ENCODE measurements at regions of chr3 and their contacts with region 1.

Region 1: DNA sequence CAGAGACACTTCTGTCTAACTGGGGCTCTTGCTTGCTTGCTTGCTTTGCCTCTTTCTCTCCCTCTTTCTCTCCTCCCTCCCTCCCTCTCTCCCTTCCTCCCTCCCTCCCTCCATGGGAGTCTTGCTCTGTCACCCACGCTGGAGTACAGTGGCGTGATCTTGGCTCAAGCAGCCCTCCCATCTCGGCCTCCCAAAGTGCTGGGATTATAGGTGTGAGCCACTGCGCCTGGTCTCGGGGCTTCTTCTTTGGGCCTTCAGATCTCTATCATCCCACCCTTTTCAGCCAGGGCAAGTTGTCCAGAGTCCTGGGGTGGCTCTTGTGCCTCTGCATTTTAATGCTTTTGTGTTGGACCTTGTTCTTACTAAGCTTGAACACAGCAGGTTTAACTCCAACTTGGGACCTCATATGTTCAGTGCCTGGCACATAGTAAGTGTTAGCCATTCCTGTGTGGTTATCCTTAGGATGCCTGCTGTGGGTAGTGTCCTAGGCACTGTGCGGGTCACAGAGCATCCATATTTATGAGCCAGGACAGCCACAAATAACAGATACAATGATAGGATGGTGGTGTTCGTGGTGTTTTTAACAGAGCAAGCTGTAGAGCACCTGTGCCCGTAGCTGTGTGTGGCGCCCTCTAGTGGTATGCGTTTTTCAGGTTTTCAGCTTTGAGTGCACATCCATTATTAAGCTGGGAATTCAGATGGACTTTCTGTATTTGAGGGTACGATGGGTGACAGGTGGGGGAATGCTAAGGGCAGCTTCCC is 75.1 kb downstream of the CCK start:
- DNase-seq: peak; percentile 70 to 94
- H3K4me3 ChIP-seq: no peak overlapping the region
- CTCF ChIP-seq: peak in 1 of 3 donors; percentile 15
- POLR2A ChIP-seq: no peak

Region 2: DNA sequence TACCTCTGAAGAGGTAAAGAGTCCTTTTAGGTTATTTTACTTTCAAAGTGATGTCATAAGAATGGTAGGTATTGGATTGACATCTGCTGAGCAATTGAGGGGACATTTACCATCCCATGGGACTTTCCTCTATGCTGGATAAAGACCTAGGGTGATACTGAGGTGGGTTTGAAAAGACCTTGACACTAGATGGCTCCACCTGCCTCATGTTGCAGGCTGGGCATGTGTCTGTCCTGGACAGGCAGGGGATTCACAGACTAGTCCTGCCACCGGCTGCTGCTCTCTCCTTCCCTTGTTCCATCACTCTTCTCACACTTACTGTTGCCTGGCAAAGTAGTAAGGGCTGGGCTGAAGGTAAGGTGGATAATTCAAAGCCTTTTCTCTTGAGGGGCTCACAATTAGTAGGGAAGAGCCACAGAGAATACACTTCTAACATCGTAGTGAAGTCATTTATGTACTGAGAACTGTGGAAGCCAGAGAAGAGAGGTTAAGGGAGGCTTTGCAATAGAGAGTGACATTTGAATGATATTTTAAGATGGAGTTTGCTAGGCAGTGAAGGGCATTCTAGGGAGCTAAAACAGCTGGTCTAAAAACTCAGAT is 72.0 kb before region 1 on chr3:
- intact Hi-C with region 1: loop called (anchors 5 kb)
- DNase-seq: no peak
- H3K4me3 ChIP-seq: no peak overlapping the region
- CTCF ChIP-seq: no peak
- POLR2A ChIP-seq: no peak

Measured in lower leg skin (tissue), 4 donors.